ENCODE measurements at regions of chr12 and their contacts with region 1.

Region 1: DNA sequence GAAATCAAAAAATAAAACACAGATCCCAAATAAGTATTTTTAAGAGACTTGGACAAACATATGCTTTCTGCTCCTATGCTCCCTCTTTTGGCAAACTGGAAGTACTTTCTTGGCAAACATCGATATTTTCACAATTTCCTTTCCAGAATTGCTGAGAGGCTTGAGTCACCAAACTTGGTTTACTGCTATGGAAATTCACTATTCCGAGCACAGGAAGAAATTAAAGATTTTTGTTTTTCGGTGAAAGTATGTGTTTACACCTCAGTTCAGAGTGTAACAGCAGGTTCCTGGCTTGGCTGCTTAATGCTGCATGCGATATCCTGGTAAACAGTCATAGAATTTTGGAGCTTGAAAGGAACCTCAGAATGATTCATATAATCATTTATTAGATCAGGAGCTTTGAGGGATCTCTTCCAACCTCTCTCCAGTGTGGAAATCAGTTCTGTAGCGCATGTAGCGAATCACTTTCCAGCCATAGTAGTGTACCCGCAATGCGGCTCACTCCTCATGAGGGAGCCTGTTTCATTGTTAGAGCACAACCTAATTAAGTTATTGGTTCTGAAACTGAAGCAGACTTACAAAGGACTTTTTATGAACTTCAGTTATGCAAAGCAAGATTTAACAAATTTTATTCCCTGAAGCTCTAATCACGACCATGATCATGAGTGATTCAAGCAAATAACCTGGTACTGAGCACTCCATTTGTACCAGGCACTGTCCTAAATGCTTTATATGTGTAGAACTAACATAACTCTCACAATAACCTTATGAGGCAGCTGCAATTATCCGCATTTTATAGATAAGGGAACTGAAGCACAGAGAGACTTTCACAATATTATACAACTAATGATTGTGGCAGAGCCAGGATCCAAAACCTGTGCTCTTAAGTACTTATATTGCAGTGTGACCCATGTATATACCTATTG is 56.4 kb upstream of the ATP2A2 start:
- DNase-seq: peak; percentile 85
- H3K4me3 Mint-ChIP-seq: peak overlapping the region; percentile 66
- H3K27ac Mint-ChIP-seq: peak overlapping the region; percentile 91
- H3K4me1 Mint-ChIP-seq: peaks cover 15% of the 10 kb centered on the region
- H3K27me3 Mint-ChIP-seq: no peaks in the 10 kb centered on the region
- CTCF ChIP-seq: peak; percentile 42

Region 2: DNA sequence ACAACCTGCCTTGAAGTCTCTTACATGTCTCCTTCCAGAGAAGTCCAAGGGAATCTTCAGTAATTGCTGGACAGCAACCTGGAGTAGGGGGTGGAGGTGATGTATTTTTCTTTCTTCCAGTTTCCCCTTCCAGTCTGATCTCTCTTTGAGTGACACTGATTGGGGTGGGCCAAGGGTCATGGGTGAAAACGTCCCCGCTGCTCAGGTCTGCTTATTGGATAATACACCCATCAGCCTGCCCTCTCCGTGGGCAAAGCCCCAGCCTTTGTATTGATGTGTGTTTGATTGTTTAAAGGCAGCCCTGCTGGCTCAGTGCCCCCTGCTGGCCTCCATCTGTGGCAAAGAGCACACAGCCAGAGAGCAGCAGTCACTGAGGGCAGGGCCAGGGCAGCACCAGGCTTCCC is 20.7 kb after region 1 on chr12:
- CTCF ChIA-PET with region 1: interaction called, 8 read pairs
- POLR2A ChIA-PET with region 1: interaction called, 43 read pairs
- intact Hi-C with region 1: no loop called
- DNase-seq: peak; percentile 54
- H3K4me3 Mint-ChIP-seq: no peak overlapping the region
- H3K27ac Mint-ChIP-seq: no peak overlapping the region
- H3K4me1 Mint-ChIP-seq: peaks cover 15% of the 10 kb centered on the region
- H3K27me3 Mint-ChIP-seq: no peaks in the 10 kb centered on the region
- CTCF ChIP-seq: peak; percentile 28

Region 3: DNA sequence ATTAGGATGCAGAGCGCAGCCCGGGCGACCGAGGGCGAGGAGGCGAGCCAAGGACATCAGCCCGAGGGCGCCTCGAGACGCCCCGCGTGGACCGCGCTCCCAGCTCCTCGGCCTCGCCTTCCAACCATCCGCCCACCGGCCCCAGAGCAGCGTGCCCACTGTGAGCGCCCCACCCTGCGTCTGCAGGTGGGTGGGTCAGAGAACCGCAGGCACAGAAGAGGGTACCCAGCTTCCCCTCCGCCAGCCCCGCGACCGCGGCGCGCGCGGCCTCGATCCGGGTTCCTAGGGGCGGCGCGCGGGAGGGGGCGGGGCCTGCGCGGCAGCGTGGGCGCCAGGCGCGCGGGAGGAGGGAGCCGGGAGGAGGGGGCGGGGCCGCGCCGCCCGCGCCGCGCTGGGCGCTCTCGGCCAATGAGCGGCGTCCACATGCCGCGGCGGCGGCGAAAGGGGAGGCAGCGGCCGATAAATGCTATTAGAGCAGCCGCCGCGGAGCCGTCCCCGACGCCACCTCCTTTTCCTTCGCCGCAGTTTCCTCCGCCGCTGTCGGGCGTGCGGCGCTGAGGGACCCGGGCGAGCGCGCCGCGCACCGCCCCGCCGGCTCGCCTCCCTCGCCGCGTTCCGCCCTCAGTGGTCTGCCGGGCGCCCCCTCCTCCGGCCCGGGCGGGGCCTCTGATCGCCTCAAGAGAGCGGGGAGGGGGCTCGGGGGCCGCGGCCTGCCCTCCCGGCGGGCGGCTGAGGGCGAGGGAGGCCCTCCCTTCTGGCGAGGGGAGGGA is 56.3 kb after region 1 on chr12 and contains the start of gene ATP2A2:
- CTCF ChIA-PET with region 1: interaction called, 4 read pairs
- POLR2A ChIA-PET with region 1: interaction called, 107 read pairs
- intact Hi-C with region 1: loop called (anchors 1 kb)
- DNase-seq: peak; percentile 92
- H3K4me3 Mint-ChIP-seq: peak within 1 kb of the TSS; percentile 87
- H3K27ac Mint-ChIP-seq: peak within 1 kb of the TSS; percentile 85
- H3K4me1 Mint-ChIP-seq: peaks cover 22% of the 10 kb centered on the region
- H3K27me3 Mint-ChIP-seq: no peaks in the 10 kb centered on the region
- CTCF ChIP-seq: no peak
- total RNA-seq, gene ATP2A2: 272 and 308 TPM in 2 replicates

Region 4: DNA sequence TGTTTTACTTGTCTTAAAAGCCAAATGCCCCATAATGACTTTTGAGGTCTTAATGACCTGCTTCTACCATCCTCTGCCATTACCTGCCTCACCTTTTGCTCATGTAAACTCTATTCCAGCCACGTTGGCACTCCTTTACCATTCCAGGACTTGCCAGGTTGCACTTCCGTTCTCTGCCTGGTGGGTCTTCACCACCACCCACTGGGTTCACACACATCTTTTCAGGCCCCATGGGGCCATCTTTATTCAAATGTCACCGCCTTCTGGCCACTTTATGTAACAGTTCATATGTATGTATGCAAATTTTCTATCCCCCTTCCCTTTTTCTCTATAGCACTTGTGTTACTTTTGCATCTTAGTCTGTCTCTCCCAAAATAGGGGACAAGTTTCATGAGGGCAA is 114.1 kb after region 1 on chr12:
- CTCF ChIA-PET with region 1: no interaction called
- POLR2A ChIA-PET with region 1: interaction called, 11 read pairs
- intact Hi-C with region 1: no loop called
- DNase-seq: peak; percentile 30
- H3K4me3 Mint-ChIP-seq: no peak overlapping the region
- H3K27ac Mint-ChIP-seq: peak overlapping the region; percentile 47
- H3K4me1 Mint-ChIP-seq: peaks cover 24% of the 10 kb centered on the region
- H3K27me3 Mint-ChIP-seq: no peaks in the 10 kb centered on the region
- CTCF ChIP-seq: peak; percentile 9